ENCODE measurements at regions of chr3 and their contacts with region 1.

Region 1: DNA sequence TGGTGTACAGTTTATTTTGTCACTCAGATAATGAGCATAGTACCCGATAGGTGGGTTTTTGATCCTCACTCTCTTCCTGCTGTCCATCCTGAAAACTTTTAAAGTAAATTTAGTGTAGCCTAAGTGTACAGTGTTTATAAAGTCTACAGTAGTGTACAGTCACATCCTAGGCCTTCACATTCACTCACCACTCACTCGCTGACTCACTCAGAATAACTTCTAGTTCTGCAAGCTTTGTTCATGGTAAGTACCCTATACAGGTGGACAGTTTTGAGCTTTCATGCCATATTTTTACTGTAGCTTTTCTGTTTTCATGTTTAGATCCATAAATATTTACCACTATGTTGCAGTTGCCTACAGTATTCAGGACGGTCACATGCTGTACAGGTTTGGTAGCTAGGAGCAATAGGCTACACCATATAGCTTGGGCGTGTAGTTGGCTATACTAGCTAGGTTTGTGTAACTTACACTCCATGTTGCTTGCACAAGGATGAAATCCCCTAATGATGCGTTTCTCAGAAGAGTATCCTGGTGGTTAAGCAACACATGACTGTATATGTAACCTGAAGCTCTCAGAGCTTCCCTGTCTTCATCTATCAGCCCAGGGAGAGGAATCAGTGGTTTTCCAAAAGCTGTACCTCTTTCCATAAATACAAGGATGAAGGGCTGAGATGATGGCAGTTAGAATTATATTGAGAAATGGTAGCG is 87.6 kb upstream of the SLC25A26 start:
- DNase-seq: peak; percentile 79
- H3K4me3 ChIP-seq: no peak overlapping the region
- H3K27ac ChIP-seq: peak overlapping the region; percentile 68
- H3K4me1 ChIP-seq: peaks cover 24% of the 10 kb centered on the region
- H3K27me3 ChIP-seq: no peaks in the 10 kb centered on the region
- CTCF ChIP-seq: no peak
- POLR2A ChIP-seq: no peak

Region 2: DNA sequence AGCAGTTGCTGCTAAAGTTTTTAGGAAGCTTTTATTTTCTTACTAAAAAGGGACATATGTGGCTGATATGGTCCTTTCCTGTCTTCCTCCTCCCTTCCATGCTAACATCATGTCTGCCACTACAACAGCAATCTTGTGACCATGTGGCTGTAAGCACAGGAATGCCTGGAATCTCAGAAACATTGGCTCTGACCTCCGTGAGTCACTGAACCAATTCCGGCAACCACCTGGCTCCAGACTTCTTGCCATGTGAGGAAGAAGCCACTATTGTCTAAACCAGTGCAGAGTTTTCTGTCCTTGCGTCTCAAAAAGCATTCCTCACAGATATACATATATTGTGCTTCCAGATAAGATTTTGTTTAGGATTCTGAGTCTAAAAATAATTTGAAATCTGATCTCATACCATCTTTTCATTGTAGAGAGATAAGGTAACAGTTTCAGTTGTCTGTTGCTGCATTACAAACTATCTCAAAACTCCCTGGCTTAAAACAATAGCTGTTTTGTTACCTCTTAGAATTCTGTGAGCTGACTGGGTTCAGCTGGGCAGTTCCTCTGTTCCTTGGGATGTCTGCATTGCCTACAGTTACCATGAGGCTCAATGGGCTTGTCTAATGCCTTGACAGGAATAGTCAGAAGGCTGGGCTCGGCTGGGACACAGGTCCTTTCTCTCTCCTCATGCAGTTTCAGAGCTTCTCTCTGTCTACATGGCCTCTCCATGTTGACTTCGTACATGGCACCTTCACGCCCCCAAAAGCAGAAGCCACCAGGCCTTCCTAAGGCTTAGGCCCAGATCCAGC is 17.1 kb before region 1 on chr3:
- CTCF ChIA-PET with region 1: interaction called, 11 read pairs
- POLR2A ChIA-PET with region 1: interaction called, 3 read pairs
- dilution Hi-C with region 1: no loop called
- intact Hi-C with region 1: loop called (anchors 1 kb)
- DNase-seq: peak; percentile 94
- H3K4me3 ChIP-seq: no peak overlapping the region
- H3K27ac ChIP-seq: peak overlapping the region; percentile 97
- H3K4me1 ChIP-seq: peaks cover 20% of the 10 kb centered on the region
- H3K27me3 ChIP-seq: no peaks in the 10 kb centered on the region
- CTCF ChIP-seq: no peak
- POLR2A ChIP-seq: no peak

Region 3: DNA sequence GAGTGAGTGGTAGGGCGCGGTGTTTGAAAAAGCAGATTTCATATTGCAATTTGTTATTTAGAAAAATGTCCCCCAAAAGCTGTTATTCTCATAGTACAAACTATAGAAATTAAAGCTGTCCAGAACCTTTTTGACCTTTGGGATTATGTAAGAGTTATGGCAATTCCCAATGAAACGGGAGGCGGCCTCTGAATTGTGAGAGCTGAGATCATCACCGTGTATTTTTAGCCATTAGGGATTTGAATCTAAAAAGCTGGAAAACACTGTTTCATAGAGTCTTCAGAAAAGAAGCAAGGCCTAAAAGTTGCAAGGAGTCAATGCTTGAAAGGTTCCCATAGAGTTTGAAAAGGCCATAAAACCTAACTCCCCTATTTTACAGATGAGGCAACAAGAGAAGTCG is 49.0 kb after region 1 on chr3:
- CTCF ChIA-PET with region 1: no interaction called
- POLR2A ChIA-PET with region 1: no interaction called
- dilution Hi-C with region 1: no loop called
- intact Hi-C with region 1: no loop called
- DNase-seq: no peak
- H3K4me3 ChIP-seq: no peak overlapping the region
- H3K27ac ChIP-seq: no peak overlapping the region
- H3K4me1 ChIP-seq: no peaks in the 10 kb centered on the region
- H3K27me3 ChIP-seq: no peaks in the 10 kb centered on the region
- CTCF ChIP-seq: no peak
- POLR2A ChIP-seq: no peak